ENCODE measurements at regions of chr10 and their contacts with region 1.

Region 1: GRCh38 chr10:5788969-5789368 is 24.3 kb downstream of the GDI2 start:
- DNase-seq: no peak
- H3K4me3 ChIP-seq: no peak overlapping the region
- H3K27ac ChIP-seq: no peak overlapping the region
- H3K4me1 ChIP-seq: no peaks in the 10 kb centered on the region
- H3K27me3 ChIP-seq: no peaks in the 10 kb centered on the region
- CTCF ChIP-seq: no peak

Region 2: DNA sequence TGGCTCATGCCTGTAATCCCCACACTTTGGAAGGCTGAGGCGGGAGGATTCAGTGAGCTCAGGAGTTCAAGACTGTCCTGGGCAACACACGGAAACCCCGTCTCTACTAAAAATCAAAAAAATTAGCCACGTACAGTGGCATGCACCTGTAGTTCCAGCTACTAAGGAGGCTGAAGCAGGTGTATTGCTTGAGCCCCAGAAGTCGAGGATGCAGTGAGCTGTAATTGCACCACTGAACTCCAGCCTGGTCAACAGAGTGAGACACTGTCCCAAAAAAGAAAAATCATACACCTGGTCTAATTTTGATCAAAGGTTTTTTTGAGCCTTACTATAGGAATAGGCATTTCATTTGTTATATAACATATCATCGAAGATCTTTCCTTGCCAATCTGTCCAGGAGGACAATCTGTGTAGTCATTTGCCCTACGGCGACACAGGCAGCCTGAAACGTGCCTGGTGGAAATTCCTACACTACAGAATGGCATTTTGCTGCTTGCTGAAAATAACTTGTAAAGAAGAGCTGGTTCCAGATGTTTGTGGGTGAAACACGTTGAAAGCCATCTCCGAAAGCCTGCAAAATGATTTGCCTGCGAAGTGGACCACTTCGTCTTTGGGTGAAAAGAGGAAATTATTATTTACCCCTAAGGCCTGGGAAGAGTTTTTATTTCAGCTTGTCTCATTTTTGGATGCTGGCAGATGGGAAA is 55.5 kb after region 1 on chr10:
- CTCF ChIA-PET with region 1: interaction called, 16 read pairs
- POLR2A ChIA-PET with region 1: no interaction called
- intact Hi-C with region 1: no loop called
- DNase-seq: no peak
- H3K4me3 ChIP-seq: no peak overlapping the region
- H3K27ac ChIP-seq: no peak overlapping the region
- H3K4me1 ChIP-seq: no peaks in the 10 kb centered on the region
- H3K27me3 ChIP-seq: no peaks in the 10 kb centered on the region
- CTCF ChIP-seq: no peak

Measured in PC-9 (cell line).